ENCODE measurements at regions of chr2 and their contacts with region 1.

Region 1: DNA sequence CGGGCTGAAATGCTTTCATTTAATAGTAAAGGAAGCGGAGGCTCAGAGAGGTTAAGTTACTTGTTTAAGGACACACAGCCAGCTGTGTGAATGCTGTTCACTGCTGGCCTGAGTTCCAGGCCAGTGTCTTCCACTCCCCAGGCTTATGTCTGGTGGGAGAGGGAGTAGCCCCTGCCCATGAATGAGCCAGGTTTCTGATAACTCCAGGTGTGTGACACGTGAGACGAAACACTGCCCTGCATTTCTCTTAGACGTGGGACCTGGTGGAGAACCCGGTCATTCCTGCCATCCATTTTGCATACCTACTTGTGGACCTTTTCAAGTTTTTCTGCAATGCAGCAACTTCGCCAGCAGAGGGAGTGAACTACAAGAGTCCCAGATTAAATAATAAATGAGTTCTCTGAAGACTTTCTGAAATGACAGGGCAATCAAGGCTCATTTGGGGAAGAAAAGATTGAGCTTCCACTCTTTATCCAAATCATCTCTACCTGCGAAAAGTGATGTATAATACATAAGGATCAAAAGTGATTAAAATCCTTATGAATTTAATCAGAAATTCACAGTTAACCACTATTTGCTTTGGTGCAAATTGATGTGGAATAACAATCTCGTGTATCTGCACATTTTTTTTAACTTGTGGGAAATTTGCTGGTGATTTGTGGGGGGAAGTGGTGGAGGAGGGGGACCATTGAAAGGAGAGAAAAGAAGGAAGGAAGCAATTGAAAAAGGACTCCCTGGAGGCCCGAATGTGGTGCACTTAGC is 79.4 kb upstream of the ASB18 start:
- DNase-seq: no peak
- H3K4me3 Mint-ChIP-seq: no peak overlapping the region
- H3K27ac Mint-ChIP-seq: no peak overlapping the region
- H3K4me1 Mint-ChIP-seq: no peaks in the 10 kb centered on the region
- H3K27me3 Mint-ChIP-seq: peaks cover 4% of the 10 kb centered on the region

Region 2: DNA sequence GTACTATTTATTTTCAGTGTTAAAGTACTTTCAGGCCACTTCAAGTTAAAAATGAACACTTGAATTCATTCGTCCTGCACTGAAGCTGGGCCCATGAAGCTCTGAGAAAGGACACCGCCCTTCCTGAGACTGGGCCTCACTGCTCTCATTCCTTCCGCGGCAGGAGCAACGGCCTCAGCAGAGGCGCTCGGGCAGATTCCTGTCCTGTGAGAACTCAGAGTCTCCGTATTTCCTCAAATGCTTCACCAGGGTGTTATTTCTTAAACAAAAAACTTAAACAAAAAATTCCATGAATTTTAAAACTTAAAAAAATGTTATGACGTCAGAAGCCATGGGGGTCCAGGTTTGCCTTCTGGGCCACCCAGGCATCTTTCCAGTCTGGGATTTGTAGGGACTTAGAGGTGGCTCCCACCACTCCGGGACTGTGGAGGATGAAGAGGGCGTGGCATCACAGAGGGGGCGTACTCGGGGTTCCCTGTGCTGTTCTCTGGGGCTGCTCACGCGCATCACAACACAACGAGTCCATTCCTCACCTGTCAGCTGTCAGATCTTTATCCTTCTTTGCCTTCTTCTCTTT is 36.5 kb after region 1 on chr2:
- intact Hi-C with region 1: no loop called
- DNase-seq: no peak
- H3K4me3 Mint-ChIP-seq: no peak overlapping the region
- H3K27ac Mint-ChIP-seq: no peak overlapping the region
- H3K4me1 Mint-ChIP-seq: no peaks in the 10 kb centered on the region
- H3K27me3 Mint-ChIP-seq: peaks cover 11% of the 10 kb centered on the region

Region 3: GRCh38 chr2:237060534-237061312 is 717.1 kb after region 1 on chr2:
- intact Hi-C with region 1: loop called (anchors 1 kb)
- DNase-seq: no peak
- H3K4me3 Mint-ChIP-seq: no peak overlapping the region
- H3K27ac Mint-ChIP-seq: no peak overlapping the region
- H3K4me1 Mint-ChIP-seq: peaks cover 32% of the 10 kb centered on the region
- H3K27me3 Mint-ChIP-seq: no peaks in the 10 kb centered on the region

Region 4: DNA sequence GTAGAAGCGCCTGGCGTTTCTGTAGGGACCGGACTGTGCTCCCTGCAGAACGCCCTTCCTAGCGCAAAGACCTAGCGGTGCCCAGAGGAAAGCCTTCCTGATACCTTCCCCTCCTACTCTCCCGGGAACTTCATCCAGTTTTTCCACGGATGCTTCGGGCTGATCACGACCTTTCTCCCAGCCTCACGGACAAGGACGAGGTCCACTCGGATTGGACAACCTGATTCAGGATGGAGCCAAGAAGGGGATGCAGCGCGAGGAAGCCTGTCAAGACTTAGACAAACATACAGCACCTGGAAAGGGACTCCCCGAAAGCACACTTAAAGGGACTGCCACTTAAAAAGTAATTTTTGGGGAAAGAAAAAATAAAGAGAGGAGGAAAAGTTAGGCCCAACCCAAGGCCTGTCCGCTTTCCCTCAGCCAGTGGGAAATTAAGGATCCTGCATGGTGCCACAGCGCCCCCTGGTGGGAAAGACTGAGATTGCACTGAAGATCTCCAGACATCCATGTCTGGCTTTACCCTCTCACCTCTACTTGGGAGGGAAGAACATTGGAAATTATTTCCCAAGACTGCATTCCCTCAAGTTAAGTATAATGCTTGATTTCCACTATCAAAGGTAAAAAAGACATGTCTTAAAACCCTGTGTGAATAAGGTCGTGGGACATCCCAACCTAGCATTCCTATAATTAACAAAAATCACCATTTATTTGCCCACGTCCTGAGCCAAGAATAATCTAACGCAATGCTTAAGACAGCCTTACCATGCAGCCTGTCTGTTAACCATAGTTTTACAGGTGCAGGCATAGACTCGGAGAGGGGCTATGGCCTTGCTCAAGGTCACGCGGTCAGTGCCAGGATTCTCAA is 728.7 kb after region 1 on chr2:
- intact Hi-C with region 1: loop called (anchors 1 kb)
- DNase-seq: peak; percentile 35
- H3K4me3 Mint-ChIP-seq: no peak overlapping the region
- H3K27ac Mint-ChIP-seq: no peak overlapping the region
- H3K4me1 Mint-ChIP-seq: no peaks in the 10 kb centered on the region
- H3K27me3 Mint-ChIP-seq: peaks cover 2% of the 10 kb centered on the region

Measured in activated T-helper 1 cell treated with anti-CD3 and anti-CD28 coated beads, Interleukin-12 subunit alpha, Interleukin-12 subunit beta, Interleukin-2, Interleukin-4 antibody, amounts not matched to agents 30 ng/mL and 10 ng/mL and 1 ng/mL, durations not matched to agents 14 hours and 24 hours and 36 hours (primary cell).